ENCODE measurements at regions of chr10 and their contacts with region 1.

Region 1: DNA sequence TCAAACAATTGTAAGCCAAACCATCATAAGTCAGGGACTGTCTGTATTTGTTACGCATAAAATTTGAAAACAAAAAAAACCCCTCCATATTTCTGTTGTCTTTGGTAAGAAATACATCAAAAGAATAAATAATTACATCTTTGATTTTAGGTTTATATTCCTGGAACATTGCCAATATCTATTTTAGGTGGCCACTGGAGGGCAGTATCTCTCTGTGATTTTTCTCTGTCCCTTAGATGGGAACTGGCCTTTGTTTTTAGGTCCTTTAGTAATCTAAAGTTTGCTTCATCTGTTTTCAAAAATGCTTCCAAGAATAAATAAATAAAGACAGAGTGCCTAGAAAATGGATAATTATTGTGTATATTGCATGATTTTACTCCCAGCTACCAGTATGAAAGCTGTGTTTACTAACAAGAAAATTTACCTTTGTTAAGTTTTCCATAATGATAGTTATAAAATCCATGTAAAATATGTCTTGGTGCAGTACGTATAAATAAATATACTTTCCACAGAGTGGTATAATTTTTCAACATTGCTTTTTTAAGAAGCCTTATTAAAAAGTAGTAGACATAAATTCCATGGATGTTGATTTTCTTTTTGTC is 64.2 kb downstream of the PHYHIPL start:
- DNase-seq: peak; percentile 16
- H3K4me3 ChIP-seq: no peak overlapping the region
- H3K27ac ChIP-seq: no peak overlapping the region
- H3K4me1 ChIP-seq: no peaks in the 10 kb centered on the region
- H3K27me3 ChIP-seq: peaks cover 2% of the 10 kb centered on the region
- CTCF ChIP-seq: peak; percentile 39 to 56

Region 2: DNA sequence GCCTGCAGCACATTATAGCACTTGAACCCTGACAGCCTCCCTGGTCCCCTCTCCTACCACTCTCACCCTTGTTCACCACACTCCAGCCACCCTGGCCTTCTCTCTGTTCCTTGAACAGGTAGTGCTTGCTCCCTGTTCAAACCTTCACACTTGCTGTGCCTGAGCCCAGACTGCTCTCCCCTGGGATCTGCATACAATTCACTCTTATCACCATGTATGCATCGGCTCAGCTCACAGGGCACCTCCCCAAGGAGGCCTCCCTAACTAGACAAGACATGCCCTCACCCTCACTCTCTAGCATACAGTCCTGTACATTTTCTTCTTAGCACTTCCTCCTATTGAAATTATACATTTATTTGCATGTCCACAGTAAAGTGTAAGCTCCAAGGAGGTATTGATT is 62.3 kb after region 1 on chr10:
- CTCF ChIA-PET with region 1: no interaction called
- dilution Hi-C with region 1: no loop called
- in situ Hi-C with region 1: no loop called
- intact Hi-C with region 1: no loop called
- DNase-seq: no peak
- H3K4me3 ChIP-seq: no peak overlapping the region
- H3K27ac ChIP-seq: peak overlapping the region; percentile 19
- H3K4me1 ChIP-seq: peaks cover 10% of the 10 kb centered on the region
- H3K27me3 ChIP-seq: no peaks in the 10 kb centered on the region
- CTCF ChIP-seq: no peak

Region 3: DNA sequence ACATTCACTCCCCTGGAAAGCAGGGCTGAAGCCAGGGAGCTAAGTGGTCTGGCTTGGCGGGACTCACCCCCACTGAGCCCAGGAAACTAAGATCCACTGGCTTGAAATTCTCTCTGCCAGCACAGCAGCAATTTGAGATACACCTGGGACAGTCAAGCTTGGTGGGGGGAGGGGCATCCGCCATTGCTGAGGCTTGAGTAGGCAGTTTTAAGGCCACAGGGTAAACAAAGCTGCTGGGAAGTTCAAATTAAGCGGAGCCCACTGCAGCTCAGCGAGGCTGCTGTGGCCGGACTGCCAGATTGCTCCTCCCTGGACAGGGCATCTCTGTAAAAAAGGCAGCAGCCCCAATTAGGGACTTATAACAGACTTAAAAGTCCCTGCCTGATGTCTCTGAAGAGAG is 229.9 kb after region 1 on chr10:
- CTCF ChIA-PET with region 1: no interaction called
- dilution Hi-C with region 1: no loop called
- in situ Hi-C with region 1: loop called in 1 of 2 experiments (anchors 10 kb)
- intact Hi-C with region 1: loop called (anchors 1 kb)
- DNase-seq: no peak
- H3K4me3 ChIP-seq: no peak overlapping the region
- H3K27ac ChIP-seq: no peak overlapping the region
- H3K4me1 ChIP-seq: no peaks in the 10 kb centered on the region
- H3K27me3 ChIP-seq: no peaks in the 10 kb centered on the region
- CTCF ChIP-seq: no peak

Region 4: DNA sequence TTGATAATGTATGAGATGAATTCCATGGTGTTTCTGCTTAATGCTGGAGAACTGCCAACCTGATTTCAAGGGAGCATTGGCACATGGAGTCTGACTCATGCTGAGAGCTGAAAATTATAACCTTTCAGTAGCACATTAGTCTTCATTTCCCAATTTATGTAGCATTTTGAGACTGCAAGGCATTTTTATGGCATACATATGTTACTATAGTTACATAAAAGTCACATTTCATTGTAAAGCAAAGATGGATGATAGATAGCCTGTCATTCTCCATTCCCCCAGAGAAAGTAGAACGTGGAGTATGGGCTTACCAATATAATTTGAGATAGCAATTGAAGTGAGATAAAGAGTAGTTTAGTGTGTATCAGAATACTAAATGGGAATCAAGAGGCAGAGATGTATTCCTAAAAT is 365.9 kb after region 1 on chr10:
- CTCF ChIA-PET with region 1: no interaction called
- dilution Hi-C with region 1: loop called (anchors 25 kb)
- in situ Hi-C with region 1: no loop called
- intact Hi-C with region 1: no loop called
- DNase-seq: peak; percentile 28
- H3K4me3 ChIP-seq: no peak overlapping the region
- H3K27ac ChIP-seq: no peak overlapping the region
- H3K4me1 ChIP-seq: no peaks in the 10 kb centered on the region
- H3K27me3 ChIP-seq: no peaks in the 10 kb centered on the region
- CTCF ChIP-seq: no peak

Region 5: GRCh38 chr10:59808896-59809643 is 568.4 kb after region 1 on chr10:
- CTCF ChIA-PET with region 1: no interaction called
- dilution Hi-C with region 1: loop called (anchors 25 kb)
- in situ Hi-C with region 1: no loop called
- intact Hi-C with region 1: loop called (anchors 10 kb)
- DNase-seq: peak; percentile 57
- H3K4me3 ChIP-seq: no peak overlapping the region
- H3K27ac ChIP-seq: no peak overlapping the region
- H3K4me1 ChIP-seq: no peaks in the 10 kb centered on the region
- H3K27me3 ChIP-seq: no peaks in the 10 kb centered on the region
- CTCF ChIP-seq: peak; percentile 75 to 82